GM10248 (cell line): ENCODE measurements at regions of chr4 and their contacts with region 1.

Region 1: GRCh38 chr4:76061982-76062381 is 12.5 kb upstream of the ART3 start:
- DNase-seq: peak; percentile 53
- CTCF ChIP-seq: no peak

Region 2: GRCh38 chr4:75752637-75753036 is 309.3 kb before region 1 on chr4:
- CTCF ChIA-PET with region 1: no interaction called
- POLR2A ChIA-PET with region 1: no interaction called
- DNase-seq: no peak
- CTCF ChIP-seq: no peak

Region 3: DNA sequence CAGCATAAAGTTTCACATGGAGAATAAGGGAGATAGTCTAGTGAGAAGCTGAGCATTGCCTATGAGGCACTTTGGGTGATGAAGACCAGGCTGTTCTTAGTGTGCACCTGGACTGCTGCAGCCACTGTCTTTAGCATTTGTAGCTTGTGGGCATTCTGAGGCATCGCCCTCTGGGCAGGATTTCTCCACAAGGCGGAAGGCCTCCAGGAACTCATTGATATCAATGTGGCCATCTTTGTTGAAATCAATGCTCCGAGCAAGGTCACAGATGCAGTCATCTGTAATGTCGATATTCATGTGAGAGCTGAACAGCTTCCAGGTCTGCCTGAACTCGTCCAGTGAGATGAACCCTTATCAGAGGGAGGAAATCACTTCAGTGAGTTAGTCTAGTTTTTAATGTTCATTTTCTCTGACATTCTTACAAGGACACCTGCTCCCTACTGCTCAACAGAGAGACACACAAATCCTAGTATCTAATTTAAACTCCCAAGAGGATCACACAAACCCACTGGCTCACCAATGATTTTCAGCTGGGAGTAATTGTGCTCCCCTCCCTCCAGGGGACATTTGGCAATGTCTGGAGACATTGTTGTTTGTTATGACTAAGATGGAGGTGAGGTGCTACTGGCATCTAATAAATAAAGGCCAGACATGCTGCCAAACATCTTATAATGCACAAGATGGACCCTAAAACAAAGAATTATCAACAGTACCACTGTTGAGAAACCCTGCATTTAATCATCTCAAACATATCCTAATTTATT is 201.2 kb before region 1 on chr4:
- CTCF ChIA-PET with region 1: no interaction called
- POLR2A ChIA-PET with region 1: no interaction called
- DNase-seq: no peak
- CTCF ChIP-seq: no peak

Region 4: DNA sequence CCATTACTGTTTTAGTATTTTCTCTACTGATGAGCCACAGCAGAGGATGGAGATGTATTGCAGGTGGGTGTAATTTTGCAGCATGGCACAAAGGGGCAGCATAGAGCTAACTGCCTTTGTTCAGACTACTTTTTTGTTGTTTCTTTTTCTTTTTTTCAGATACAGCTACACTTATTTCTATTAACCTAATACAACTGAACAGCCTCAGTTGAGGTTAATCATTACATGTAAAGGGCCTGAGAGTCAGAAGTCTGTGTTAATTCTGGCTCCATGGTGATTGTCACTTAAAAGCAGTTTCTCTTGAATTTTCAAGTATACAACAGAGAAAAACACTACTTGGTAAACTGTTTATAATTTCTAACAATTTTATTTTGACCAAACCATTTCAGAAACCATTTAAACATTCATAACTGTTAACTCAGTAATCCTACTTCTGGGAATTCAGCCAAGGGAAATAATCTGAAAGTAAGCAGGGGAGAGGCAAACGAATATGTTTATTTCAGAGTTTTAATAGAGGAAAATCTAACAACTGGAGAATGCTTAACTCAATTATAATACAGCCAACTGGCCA is 145.8 kb before region 1 on chr4:
- CTCF ChIA-PET with region 1: interaction called, 17 read pairs
- POLR2A ChIA-PET with region 1: no interaction called
- DNase-seq: peak; percentile 65
- CTCF ChIP-seq: peak; percentile 73